Heart right ventricle (tissue), 16 donors: ENCODE measurements at regions of chr5 and their contacts with region 1.

Region 1: DNA sequence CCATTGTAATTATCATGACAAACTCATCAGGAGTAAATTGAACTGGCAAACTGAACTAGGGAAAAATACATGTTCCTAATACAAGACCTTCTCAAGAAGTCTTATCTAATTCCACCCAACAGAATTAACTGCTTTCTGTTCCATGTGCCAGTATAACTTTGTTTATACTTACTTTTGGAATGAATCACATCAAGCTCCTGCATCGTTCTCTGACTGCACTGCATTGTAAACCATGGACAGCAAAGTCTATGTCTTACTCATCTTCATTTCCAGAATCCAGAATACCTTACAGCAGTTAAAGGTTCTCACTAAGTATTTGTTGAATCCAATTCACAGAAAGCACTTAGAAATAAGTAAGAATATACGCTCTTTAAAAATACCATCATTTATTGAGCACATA is 102.8 kb downstream of the PLK2 start:
- DNase-seq: no peak
- ATAC-seq: no peak
- H3K4me3 ChIP-seq: no peak overlapping the region
- H3K27ac ChIP-seq: no peak overlapping the region
- H3K4me1 ChIP-seq: no peaks in the 10 kb centered on the region
- H3K27me3 ChIP-seq: no peaks in the 10 kb centered on the region
- CTCF ChIP-seq: no peak

Region 2: DNA sequence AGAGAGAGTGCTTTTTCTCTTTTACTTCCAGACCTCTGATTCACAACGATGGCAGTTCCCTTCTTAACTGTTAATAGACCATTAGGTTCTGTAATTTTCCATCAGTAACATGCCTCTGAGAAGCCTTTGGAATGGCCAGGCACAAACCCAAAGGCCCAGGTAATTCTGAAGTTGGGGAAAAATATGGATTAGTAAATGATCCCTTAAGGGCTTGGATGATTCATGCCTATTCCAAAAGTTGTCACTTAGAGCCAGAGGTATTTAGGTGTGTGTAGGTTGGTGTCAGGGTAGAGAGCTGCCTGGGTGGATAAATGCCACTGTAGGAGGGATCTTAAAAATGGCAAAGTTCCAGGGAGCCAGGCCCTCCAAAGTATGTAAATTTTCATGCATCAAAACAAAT is 126.1 kb before region 1 on chr5:
- intact Hi-C with region 1: no loop called
- DNase-seq: no peak
- ATAC-seq: no peak
- H3K4me3 ChIP-seq: no peak overlapping the region
- H3K27ac ChIP-seq: no peak overlapping the region
- H3K4me1 ChIP-seq: peaks cover 0 to 26% (median 11%) of the 10 kb centered on the region in 9 donors
- H3K27me3 ChIP-seq: no peaks in the 10 kb centered on the region
- CTCF ChIP-seq: no peak

Region 3: DNA sequence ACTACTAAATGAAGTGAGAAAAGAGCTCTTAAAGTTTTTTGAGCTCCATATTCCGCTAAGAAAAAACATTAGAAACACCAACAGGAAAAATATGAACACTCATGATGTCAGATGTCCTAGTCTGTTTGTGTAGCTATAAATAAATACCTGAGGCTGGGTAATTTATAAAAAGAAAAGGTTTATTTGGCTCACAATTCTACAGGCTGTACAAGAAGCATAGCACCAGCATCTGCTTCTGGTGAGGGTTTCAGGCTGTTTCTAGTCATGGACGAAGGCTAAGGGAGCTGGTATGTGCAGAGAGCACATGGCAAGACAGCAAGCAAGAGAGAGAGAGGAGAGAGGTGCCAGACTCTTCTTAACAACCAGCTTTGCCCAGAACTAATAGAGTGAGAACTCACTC is 83.4 kb before region 1 on chr5:
- intact Hi-C with region 1: no loop called
- DNase-seq: no peak
- ATAC-seq: peak in 4 of 8 donors; percentile 35 to 71 (median 63)
- H3K4me3 ChIP-seq: no peak overlapping the region
- H3K27ac ChIP-seq: peak overlapping the region in 7 of 10 donors; percentile 2 to 72 (median 49)
- H3K4me1 ChIP-seq: peaks cover 0 to 20% (median 9%) of the 10 kb centered on the region in 9 donors
- H3K27me3 ChIP-seq: no peaks in the 10 kb centered on the region
- CTCF ChIP-seq: no peak

Region 4: GRCh38 chr5:58452566-58453258 is 95.6 kb after region 1 on chr5:
- intact Hi-C with region 1: loop called in 3 of 10 experiments (anchors 5 to 10 kb)
- DNase-seq: no peak
- ATAC-seq: peak in 1 of 8 donors; percentile 23
- H3K4me3 ChIP-seq: peak overlapping the region in 3 of 10 donors; percentile 77 to 89 (median 88)
- H3K27ac ChIP-seq: peak overlapping the region in 2 of 10 donors; percentile 6 to 99
- H3K4me1 ChIP-seq: peaks cover 0 to 41% (median 24%) of the 10 kb centered on the region in 9 donors
- H3K27me3 ChIP-seq: peaks cover 0 to under 1% (median 0%) of the 10 kb centered on the region in 7 donors
- CTCF ChIP-seq: no peak